Activated T-helper 1 cell treated with anti-CD3 and anti-CD28 coated beads, Interleukin-12 subunit alpha, Interleukin-12 subunit beta, Interleukin-2, Interleukin-4 antibody, amounts not matched to agents 30 ng/mL and 10 ng/mL and 1 ng/mL, durations not matched to agents 14 hours and 24 hours and 36 hours (primary cell): ENCODE measurements at regions of chr6 and their contacts with region 1.

Region 1: GRCh38 chr6:106184629-106185028 is 98.5 kb downstream of the PRDM1 start:
- DNase-seq: no peak
- H3K4me3 Mint-ChIP-seq: no peak overlapping the region
- H3K27ac Mint-ChIP-seq: no peak overlapping the region
- H3K4me1 Mint-ChIP-seq: peaks cover 70% of the 10 kb centered on the region
- H3K27me3 Mint-ChIP-seq: no peaks in the 10 kb centered on the region

Region 2: DNA sequence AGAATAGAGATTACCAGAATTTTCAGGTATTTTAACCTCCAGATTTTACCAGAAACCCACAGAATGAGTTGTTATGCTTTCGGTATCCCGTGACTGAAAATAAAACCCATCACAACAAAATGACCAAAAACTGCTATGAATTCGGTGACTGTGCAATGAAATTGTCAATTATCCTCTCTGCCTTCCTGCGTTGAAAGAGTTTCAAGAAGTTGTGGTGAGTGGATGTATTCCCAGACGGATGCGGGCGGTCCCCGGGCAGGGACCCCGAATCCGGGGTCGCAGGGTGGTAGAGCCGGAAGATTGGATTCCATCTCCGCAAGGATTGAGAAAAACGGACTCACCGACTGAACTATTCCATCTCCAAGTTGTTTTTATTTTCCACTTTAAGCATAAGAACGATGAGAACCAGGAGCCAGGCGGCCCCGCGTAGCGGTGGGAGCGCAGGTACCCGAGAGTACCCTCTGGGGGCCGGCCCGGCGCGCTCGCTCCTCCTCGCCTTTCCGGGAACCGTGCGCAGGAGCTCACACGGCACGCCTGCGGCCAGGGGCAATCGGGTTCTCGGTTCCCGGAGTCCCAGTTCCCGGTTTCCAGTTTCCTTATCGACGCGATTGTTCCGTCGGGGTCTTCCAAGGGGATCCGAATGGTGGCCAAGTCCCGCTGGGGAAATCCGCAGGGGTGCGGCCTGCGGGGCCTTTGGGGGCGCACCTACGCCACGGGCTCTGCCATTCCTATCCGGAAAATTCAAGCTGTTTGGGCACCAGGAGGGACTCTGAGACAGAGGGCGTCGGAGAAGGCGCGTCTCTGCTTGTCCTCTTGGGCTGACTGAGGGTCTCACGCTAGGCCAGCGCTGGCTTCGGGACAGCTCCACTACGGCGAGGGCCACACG is 203.4 kb before region 1 on chr6:
- intact Hi-C with region 1: loop called (anchors 1 kb)
- DNase-seq: peak; percentile 48
- H3K4me3 Mint-ChIP-seq: peak overlapping the region; percentile 84
- H3K27ac Mint-ChIP-seq: peak overlapping the region; percentile 91
- H3K4me1 Mint-ChIP-seq: peaks cover 79% of the 10 kb centered on the region
- H3K27me3 Mint-ChIP-seq: no peaks in the 10 kb centered on the region

Region 3: DNA sequence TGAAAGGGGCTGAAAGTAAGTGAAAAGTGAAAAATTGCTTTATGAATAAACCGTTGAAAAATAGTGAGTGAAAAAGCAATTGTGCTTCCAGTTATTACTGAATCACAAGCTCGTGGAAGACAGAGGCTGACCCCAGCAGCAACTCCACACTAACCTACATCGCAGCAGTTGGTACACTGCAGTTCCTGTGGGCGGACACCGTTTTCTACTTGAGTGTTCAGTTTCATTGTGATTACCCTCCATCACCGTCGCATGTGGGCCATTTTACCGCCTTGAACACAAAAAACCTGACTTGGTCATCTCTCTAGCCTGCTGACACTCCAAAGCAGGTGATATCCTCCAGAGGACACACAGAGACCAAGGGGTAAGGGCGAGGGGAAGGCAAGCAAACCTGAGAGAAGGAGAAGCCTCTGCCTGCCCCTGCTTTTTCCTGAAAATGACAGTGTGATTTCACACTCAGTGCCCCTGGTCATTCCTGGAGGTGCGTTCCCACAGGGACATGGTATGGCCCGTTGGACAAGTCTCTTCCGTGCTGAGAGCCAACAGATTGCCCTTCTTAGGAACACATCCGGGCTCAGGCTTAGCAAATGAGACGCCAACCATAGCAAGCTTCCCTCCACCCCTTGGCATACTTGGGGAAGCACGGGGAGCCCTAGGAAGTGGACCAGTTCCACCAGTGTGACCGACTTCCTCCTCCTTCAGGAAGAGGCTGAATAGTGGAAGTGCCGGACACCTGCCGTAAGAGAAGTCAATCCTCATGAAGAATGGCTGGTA is 70.0 kb before region 1 on chr6:
- intact Hi-C with region 1: loop called (anchors 1 kb)
- DNase-seq: peak; percentile 47
- H3K4me3 Mint-ChIP-seq: peak overlapping the region; percentile 58
- H3K27ac Mint-ChIP-seq: peak overlapping the region; percentile 82
- H3K4me1 Mint-ChIP-seq: peaks cover 93% of the 10 kb centered on the region
- H3K27me3 Mint-ChIP-seq: peaks cover 2% of the 10 kb centered on the region

Region 4: DNA sequence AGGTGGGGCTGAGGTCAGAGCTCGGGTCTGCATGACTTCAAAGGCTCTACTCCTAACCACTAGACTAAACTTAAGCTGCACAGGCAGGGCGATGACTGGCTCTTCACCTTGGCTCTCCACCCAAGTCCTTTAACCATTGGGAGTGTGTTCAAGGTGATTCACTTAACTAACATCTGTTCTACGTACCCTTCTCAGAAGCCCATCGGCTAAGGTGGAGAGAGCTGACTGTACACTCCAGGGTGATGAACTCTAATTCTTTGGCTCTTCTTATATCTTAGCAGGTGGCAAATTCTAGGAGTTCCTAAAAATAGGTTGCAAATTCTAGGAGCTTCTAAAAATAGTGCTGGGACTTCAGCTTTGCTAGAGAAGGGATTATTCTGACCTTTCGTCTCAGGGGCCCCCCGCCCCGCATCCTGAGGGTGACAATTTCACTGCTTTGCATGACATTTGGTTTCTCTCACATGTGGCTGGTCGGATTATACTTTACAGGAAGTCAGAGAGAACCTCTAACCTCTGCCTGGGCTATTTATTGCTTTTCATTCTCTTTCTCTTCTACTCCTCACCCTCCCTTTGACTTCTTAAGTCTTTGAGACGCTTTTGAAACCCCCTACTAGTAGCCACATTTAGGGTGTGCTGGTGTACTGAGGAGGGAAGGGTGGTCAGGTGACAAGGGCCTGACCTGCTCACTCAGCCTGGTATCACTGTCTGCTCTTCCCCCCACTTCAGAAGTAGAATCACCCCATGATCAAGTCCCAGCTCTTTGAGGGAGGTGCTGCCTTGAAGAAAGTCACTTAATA is 43.0 kb before region 1 on chr6:
- intact Hi-C with region 1: loop called (anchors 1 kb)
- DNase-seq: peak; percentile 51
- H3K4me3 Mint-ChIP-seq: peak overlapping the region; percentile 59
- H3K27ac Mint-ChIP-seq: peak overlapping the region; percentile 90
- H3K4me1 Mint-ChIP-seq: peaks cover 70% of the 10 kb centered on the region
- H3K27me3 Mint-ChIP-seq: no peaks in the 10 kb centered on the region

Region 5: GRCh38 chr6:106194949-106195921 is 10.6 kb after region 1 on chr6:
- intact Hi-C with region 1: loop called (anchors 1 kb)
- DNase-seq: no peak
- H3K4me3 Mint-ChIP-seq: peak overlapping the region; percentile 58
- H3K27ac Mint-ChIP-seq: peak overlapping the region; percentile 78
- H3K4me1 Mint-ChIP-seq: peaks cover 56% of the 10 kb centered on the region
- H3K27me3 Mint-ChIP-seq: no peaks in the 10 kb centered on the region

Region 6: DNA sequence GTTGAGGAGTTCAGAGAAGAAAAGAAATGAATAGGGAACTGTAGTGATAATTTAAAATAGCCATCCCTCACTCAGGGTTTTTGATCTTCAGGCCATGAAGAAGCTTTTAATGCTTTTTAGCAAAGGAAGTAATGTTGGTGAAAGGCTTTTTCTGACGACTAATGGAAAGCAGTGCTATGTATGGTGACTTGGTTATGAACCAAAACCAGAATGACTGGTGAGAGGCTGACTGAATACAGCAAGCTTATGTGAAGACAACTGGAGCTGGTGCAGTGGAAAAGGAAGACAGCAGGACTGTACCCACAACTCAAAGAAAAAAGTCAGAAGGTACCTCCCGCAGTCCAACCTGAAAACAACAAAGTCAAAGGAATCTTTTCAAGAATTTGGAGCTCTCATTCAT is 20.3 kb after region 1 on chr6:
- intact Hi-C with region 1: loop called (anchors 2 kb)
- DNase-seq: no peak
- H3K4me3 Mint-ChIP-seq: no peak overlapping the region
- H3K27ac Mint-ChIP-seq: no peak overlapping the region
- H3K4me1 Mint-ChIP-seq: peaks cover 28% of the 10 kb centered on the region
- H3K27me3 Mint-ChIP-seq: no peaks in the 10 kb centered on the region

Region 7: GRCh38 chr6:106347341-106347740 is 162.7 kb after region 1 on chr6:
- intact Hi-C with region 1: no loop called
- DNase-seq: no peak
- H3K4me3 Mint-ChIP-seq: no peak overlapping the region
- H3K27ac Mint-ChIP-seq: no peak overlapping the region
- H3K4me1 Mint-ChIP-seq: no peaks in the 10 kb centered on the region
- H3K27me3 Mint-ChIP-seq: peaks cover 15% of the 10 kb centered on the region